AG04449 (cell line): ENCODE measurements at regions of chr1 and their contacts with region 1.

Region 1: DNA sequence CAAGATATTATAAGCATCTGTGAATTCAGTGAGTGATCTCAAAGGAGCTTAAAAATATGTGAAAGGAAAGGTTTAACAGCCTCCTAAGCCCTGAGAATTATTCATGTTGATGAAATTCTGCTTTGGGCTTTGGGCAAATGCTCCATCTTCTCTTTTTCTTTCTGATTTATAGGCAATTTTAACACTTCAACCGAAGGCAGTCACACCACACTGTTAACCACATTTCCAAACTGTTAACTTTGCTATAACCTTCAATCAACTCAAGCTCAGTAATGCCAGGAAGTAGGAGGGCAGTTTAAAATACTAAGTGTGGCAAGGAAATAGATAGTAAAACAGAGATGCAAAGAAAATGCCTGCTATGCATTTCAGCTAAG is 54.4 kb upstream of the NEK7 start:
- DNase-seq: no peak
- H3K4me3 ChIP-seq: no peak overlapping the region
- CTCF ChIP-seq: no peak

Region 2: GRCh38 chr1:198088360-198089071 is 13.9 kb before region 1 on chr1:
- CTCF ChIA-PET with region 1: interaction called, 36 read pairs
- POLR2A ChIA-PET with region 1: interaction called, 3 read pairs
- DNase-seq: no peak
- H3K4me3 ChIP-seq: peak overlapping the region; percentile 42
- CTCF ChIP-seq: peak; percentile 34

Region 3: DNA sequence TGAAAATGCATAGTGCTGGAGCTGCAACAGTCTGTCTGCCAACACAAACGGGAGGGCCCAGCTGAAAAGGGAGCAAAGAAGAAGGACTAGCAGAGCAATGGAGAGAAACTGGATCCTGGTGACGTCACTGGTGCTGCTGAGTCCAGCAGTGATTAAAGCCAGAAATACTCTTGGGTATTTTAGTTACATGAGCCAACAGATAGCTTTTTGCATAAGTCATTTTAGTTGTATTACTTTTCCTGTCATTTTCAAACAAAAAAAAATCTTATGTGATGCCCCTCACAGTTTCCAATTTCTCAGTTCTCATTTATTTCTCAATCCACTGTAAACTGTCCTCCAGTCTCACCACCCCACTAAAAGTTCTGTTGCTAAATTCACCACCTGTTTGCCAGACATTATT is 15.7 kb after region 1 on chr1:
- CTCF ChIA-PET with region 1: interaction called, 18 read pairs
- POLR2A ChIA-PET with region 1: interaction called, 5 read pairs
- DNase-seq: peak; percentile 91
- H3K4me3 ChIP-seq: no peak overlapping the region
- CTCF ChIP-seq: no peak